ENCODE measurements at regions of chr15 and their contacts with region 1.

Region 1: GRCh38 chr15:92097474-92098178 is 244.1 kb downstream of the SLCO3A1 start:
- DNase-seq: peak; percentile 71
- ATAC-seq: peak; percentile 84
- H3K4me3 Mint-ChIP-seq: no peak overlapping the region
- H3K27ac Mint-ChIP-seq: no peak overlapping the region
- H3K4me1 Mint-ChIP-seq: peaks cover 36% of the 10 kb centered on the region
- H3K27me3 Mint-ChIP-seq: no peaks in the 10 kb centered on the region
- CTCF ChIP-seq: peak; percentile 83

Region 2: DNA sequence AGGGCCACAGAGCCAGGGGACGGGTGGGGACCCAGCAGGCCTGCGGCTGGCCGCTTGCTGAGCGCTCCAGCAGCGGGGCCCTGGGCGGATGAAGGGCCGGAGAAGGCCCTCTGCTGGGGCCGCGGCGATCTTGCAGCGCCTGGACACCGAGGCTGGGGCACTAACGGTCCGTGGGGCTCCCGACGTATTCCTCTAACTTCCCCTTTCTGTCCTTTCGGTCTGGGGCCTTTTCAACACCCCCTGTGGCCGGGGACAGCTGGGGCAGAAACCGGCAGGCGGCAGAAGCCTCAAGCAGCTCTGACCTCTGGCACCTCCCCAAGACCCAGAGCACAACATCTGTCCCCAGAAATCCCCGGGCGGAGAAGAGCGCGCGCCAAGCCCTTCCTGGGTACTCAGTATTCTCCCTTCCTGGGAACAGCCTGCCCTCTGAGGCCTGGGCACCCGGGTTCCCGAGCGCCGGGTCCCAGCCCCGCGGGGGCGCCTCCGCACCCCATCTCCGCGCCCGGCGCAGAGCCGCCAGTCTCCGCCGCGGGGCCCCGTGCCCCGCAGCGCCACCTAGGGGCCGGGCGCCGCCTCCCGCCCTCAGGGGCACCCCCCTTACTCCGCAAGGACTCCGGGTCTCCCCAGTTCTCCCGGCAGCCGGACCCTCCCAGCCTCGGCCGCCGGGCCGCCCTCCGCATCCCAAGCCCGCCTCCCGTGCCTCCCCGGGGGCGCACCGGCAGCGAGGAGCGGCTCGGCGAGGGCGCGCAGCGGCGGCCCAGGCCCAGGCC is 244.7 kb before region 1 on chr15:
- CTCF ChIA-PET with region 1: no interaction called
- POLR2A ChIA-PET with region 1: no interaction called
- intact Hi-C with region 1: no loop called
- DNase-seq: peak; percentile 65
- ATAC-seq: peak; percentile 65
- H3K4me3 Mint-ChIP-seq: peak overlapping the region; percentile 75
- H3K27ac Mint-ChIP-seq: peak overlapping the region; percentile 69
- H3K4me1 Mint-ChIP-seq: peaks cover 57% of the 10 kb centered on the region
- H3K27me3 Mint-ChIP-seq: peaks cover 3% of the 10 kb centered on the region
- CTCF ChIP-seq: peak; percentile 82

Region 3: GRCh38 chr15:92158434-92158833 is 60.8 kb after region 1 on chr15:
- CTCF ChIA-PET with region 1: no interaction called
- POLR2A ChIA-PET with region 1: no interaction called
- intact Hi-C with region 1: loop called (anchors 10 kb)
- DNase-seq: peak; percentile 78
- ATAC-seq: peak; percentile 94
- H3K4me3 Mint-ChIP-seq: no peak overlapping the region
- H3K27ac Mint-ChIP-seq: no peak overlapping the region
- H3K4me1 Mint-ChIP-seq: peaks cover 25% of the 10 kb centered on the region
- H3K27me3 Mint-ChIP-seq: no peaks in the 10 kb centered on the region
- CTCF ChIP-seq: no peak

Region 4: DNA sequence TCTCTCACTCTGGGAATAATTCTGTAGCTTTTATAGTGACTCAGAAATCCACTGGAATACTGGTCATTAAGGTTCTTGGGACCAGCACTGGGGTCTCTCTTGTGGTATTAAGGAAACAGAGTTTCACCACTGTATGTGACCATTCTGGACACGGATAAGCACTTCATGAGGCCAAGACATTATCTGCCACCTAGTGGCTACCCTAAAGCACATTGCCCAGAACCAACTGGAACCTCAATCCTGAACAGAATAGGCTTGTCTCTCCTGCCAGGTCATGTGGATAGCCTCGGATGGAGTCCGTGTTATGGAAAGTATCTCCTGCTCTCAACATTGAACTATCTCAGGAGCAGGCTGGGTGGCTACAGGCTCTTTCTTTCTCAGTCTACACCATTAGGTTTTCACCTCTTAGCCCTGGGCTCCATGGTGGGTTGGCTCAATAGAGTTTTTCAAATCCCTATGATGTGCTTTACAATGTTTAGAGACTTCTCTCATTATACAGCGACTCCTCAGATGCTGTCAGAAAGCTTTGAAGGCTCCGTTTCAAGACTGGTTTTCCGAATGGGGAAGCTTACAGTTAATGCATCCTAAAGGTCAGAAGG is 128.5 kb after region 1 on chr15:
- CTCF ChIA-PET with region 1: interaction called, 6 read pairs
- POLR2A ChIA-PET with region 1: no interaction called
- intact Hi-C with region 1: loop called (anchors 5 kb)
- DNase-seq: no peak
- ATAC-seq: no peak
- H3K4me3 Mint-ChIP-seq: no peak overlapping the region
- H3K27ac Mint-ChIP-seq: no peak overlapping the region
- H3K4me1 Mint-ChIP-seq: no peaks in the 10 kb centered on the region
- H3K27me3 Mint-ChIP-seq: peaks cover 12% of the 10 kb centered on the region
- CTCF ChIP-seq: peak; percentile 37

Region 5: GRCh38 chr15:92383519-92384326 is 286.1 kb after region 1 on chr15:
- CTCF ChIA-PET with region 1: interaction called, 5 read pairs
- POLR2A ChIA-PET with region 1: no interaction called
- intact Hi-C with region 1: loop called (anchors 5 kb)
- DNase-seq: peak; percentile 56
- ATAC-seq: peak; percentile 42
- H3K4me3 Mint-ChIP-seq: no peak overlapping the region
- H3K27ac Mint-ChIP-seq: no peak overlapping the region
- H3K4me1 Mint-ChIP-seq: no peaks in the 10 kb centered on the region
- H3K27me3 Mint-ChIP-seq: peaks cover 5% of the 10 kb centered on the region
- CTCF ChIP-seq: peak; percentile 73

Region 6: GRCh38 chr15:92714477-92715401 is 617.1 kb after region 1 on chr15:
- CTCF ChIA-PET with region 1: interaction called, 7 read pairs
- POLR2A ChIA-PET with region 1: no interaction called
- intact Hi-C with region 1: loop called (anchors 10 kb)
- DNase-seq: peak; percentile 83
- ATAC-seq: peak; percentile 92
- H3K4me3 Mint-ChIP-seq: peak overlapping the region; percentile 55
- H3K27ac Mint-ChIP-seq: no peak overlapping the region
- H3K4me1 Mint-ChIP-seq: peaks cover 5% of the 10 kb centered on the region
- H3K27me3 Mint-ChIP-seq: peaks cover 15% of the 10 kb centered on the region
- CTCF ChIP-seq: peak; percentile 98